ENCODE measurements at regions of chr4 and their contacts with region 1.

Region 1: DNA sequence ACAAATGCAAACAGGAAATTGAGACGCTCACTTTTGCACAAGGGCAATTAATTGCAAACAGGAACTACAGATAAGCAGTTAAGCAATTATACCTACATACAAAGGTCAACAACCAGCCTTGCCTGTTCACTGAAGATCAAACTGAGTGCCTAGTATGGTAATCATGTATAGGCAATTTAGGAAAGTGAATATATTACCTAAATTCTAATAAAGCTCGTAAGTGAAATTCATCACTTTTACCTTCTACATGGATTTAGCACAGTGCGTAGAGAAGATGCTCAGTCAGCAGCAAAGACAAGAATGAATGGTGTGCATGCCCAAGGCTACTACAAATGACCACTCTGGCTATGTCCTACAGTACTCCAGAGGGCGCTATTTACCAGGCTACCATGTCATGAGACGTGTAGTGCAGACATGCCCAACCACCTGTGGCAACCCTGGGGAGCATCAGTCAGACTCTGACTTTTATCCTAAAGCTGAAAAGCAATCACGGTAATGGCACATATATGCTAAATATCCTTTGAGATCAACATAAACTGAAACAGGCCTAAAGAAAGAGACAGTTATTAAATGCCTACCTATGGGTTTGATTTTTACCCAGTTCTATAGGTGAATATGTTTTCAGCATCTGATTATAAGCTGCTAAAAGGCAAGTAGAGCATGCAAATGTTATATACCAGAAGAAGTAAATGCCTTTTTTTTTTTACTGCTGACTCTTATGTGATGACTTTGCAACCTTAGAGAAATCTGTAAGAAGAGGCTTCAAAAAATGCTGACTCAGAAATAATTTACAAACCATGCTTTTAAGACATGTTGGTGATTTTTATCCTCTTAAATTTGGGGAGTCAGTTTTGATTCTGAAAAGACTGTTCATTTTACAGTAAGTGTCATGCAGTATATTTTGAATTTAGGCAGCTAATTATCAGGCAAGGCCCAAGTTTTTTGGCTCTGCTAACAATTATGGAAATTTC is 178.0 kb downstream of the PPP3CA start:
- DNase-seq: peak; percentile 76
- ATAC-seq: peak; percentile 98
- H3K4me3 Mint-ChIP-seq: no peak overlapping the region
- H3K27ac Mint-ChIP-seq: no peak overlapping the region
- H3K4me1 Mint-ChIP-seq: peaks cover 4% of the 10 kb centered on the region
- H3K27me3 Mint-ChIP-seq: no peaks in the 10 kb centered on the region
- CTCF ChIP-seq: peak; percentile 85

Region 2: DNA sequence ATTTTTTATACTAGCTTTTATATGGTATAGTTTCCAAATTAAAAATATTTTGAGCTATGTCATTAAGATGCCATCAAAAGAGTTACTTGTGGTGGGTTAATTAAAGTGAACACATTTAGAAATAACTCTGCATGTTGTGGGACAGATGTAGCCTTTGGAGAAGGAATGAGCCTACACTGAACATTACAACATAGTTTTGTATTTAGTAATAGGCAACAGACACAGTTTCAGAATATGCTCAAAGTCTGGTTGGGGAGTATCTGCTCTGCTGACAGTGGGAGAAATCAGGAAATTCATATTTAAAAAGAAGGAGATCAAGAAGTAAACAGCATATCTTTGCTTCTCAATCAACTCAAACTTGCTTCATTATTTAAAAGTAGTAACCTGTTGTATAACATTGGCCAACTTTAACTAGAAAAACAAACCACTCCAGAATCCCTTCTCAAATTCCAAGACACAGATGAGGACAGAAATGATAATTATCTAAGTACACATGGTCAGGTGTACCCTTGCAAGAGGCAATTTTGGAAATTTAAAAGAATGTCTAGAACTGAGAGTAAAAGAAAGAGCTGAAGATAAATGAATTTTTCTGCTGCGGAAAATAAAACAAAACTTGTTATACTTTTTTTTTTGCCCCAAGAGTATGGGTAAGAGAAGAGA is 675.0 kb before region 1 on chr4:
- CTCF ChIA-PET with region 1: no interaction called
- POLR2A ChIA-PET with region 1: no interaction called
- intact Hi-C with region 1: no loop called
- DNase-seq: no peak
- ATAC-seq: no peak
- H3K4me3 Mint-ChIP-seq: no peak overlapping the region
- H3K27ac Mint-ChIP-seq: no peak overlapping the region
- H3K4me1 Mint-ChIP-seq: no peaks in the 10 kb centered on the region
- H3K27me3 Mint-ChIP-seq: no peaks in the 10 kb centered on the region
- CTCF ChIP-seq: no peak

Region 3: DNA sequence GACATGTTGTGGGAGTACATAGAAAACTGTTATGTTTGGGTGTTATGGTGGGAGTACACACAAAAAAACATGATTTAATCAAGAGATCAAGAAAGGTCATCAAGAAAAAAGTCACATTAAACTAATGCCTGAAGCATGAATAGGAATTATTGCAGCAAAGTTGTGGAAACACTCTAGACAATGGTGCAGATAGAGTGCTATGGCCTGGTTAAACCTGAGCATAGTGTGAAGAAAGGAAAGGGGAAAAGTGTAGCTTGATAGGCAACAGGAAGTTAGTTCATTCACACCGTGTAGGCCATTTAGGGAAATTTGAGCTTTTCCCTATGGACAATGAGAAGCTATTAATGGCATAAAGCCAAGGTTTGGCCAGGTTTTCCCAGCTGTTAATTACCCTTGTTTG is 489.4 kb before region 1 on chr4:
- CTCF ChIA-PET with region 1: no interaction called
- POLR2A ChIA-PET with region 1: no interaction called
- intact Hi-C with region 1: no loop called
- DNase-seq: no peak
- ATAC-seq: no peak
- H3K4me3 Mint-ChIP-seq: no peak overlapping the region
- H3K27ac Mint-ChIP-seq: no peak overlapping the region
- H3K4me1 Mint-ChIP-seq: no peaks in the 10 kb centered on the region
- H3K27me3 Mint-ChIP-seq: peaks cover 2% of the 10 kb centered on the region
- CTCF ChIP-seq: no peak

Region 4: DNA sequence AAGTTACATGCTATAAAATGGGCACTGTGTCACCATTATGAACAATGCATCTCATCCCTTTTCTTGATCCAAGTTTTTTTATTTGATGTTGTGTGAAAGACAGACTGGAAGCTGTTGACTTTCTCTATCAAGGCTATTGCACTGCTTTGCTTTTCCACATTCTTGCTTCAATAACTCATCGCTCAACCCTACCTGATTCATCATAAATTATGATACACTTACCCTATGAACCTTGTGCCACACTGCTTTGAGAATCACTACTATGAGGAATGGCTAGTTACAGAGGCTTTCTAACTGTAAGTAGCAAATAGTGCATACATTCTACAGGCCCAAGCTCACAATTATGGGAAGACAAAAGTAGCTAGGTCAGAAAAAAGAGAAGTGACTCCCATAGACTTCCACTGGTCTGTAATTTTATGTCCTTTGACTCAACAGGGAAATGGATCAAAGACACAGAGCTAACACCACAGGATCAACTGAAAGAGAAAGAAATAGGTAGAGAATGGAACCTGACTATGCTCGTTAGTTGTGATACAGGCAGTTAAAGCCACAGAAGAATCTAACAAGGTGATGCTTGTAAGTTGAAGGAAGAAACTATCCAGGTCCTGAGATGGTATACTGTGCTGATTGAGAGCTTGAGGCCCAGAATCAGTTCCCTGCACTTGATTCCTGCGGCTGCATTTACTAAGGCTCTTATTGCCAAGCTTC is 14.5 kb after region 1 on chr4:
- CTCF ChIA-PET with region 1: interaction called, 11 read pairs
- POLR2A ChIA-PET with region 1: no interaction called
- intact Hi-C with region 1: no loop called
- DNase-seq: no peak
- ATAC-seq: no peak
- H3K4me3 Mint-ChIP-seq: no peak overlapping the region
- H3K27ac Mint-ChIP-seq: no peak overlapping the region
- H3K4me1 Mint-ChIP-seq: peaks cover 8% of the 10 kb centered on the region
- H3K27me3 Mint-ChIP-seq: no peaks in the 10 kb centered on the region
- CTCF ChIP-seq: no peak

Region 5: GRCh38 chr4:101294597-101294996 is 125.3 kb after region 1 on chr4:
- CTCF ChIA-PET with region 1: no interaction called
- POLR2A ChIA-PET with region 1: no interaction called
- intact Hi-C with region 1: no loop called
- DNase-seq: no peak
- ATAC-seq: no peak
- H3K4me3 Mint-ChIP-seq: no peak overlapping the region
- H3K27ac Mint-ChIP-seq: no peak overlapping the region
- H3K4me1 Mint-ChIP-seq: peaks cover 7% of the 10 kb centered on the region
- H3K27me3 Mint-ChIP-seq: no peaks in the 10 kb centered on the region
- CTCF ChIP-seq: no peak

Region 6: GRCh38 chr4:101347557-101348366 is 178.4 kb after region 1 on chr4:
- CTCF ChIA-PET with region 1: interaction called, 9 read pairs
- POLR2A ChIA-PET with region 1: no interaction called
- intact Hi-C with region 1: loop called (anchors 5 kb)
- DNase-seq: peak; percentile 98
- ATAC-seq: peak; percentile 93
- H3K4me3 Mint-ChIP-seq: peak overlapping the region; percentile 95
- H3K27ac Mint-ChIP-seq: peak overlapping the region; percentile 87
- H3K4me1 Mint-ChIP-seq: peaks cover 30% of the 10 kb centered on the region
- H3K27me3 Mint-ChIP-seq: peaks cover 19% of the 10 kb centered on the region
- CTCF ChIP-seq: no peak

Region 7: DNA sequence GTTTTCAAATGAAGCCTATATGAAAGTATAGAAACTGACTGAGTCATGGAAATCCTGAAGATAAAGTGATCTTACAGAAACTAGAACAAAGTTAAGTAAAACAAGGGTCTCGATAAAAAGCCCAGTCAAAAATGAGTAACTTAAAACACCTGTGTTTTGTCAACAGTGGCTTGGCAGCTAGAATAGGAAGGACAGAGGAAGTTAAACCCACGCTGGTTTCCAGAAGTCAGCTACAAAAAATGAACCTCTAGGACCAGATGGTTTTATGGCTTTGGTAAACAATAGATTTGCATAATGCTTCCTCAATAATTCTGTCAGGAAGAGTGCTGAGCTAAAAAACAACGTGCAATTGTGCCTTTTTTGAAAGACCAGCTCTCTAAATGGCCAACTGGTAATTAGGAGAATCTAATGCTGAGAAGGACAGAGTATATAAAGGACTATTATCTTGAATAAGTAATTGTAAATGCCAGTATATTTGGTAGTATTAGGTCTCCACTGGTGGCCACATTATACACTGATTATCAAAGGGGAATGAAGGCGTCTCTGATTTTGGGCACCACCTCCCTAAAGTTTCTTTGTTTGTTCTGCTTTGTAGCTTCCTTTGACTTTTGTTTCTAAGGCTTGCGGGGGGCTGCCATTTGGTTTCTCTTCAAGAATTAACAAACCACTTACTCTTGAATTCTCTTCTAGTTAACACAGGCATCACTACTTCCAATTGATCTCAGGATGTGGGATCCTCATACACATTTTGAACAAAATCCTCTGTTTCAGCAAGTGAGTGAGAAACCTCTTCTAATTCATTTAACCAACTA is 250.2 kb after region 1 on chr4:
- CTCF ChIA-PET with region 1: interaction called, 7 read pairs
- POLR2A ChIA-PET with region 1: no interaction called
- intact Hi-C with region 1: loop called (anchors 10 kb)
- DNase-seq: peak; percentile 40
- ATAC-seq: peak; percentile 35
- H3K4me3 Mint-ChIP-seq: no peak overlapping the region
- H3K27ac Mint-ChIP-seq: peak overlapping the region; percentile 46
- H3K4me1 Mint-ChIP-seq: peaks cover 42% of the 10 kb centered on the region
- H3K27me3 Mint-ChIP-seq: peaks cover 24% of the 10 kb centered on the region
- CTCF ChIP-seq: no peak

Region 8: DNA sequence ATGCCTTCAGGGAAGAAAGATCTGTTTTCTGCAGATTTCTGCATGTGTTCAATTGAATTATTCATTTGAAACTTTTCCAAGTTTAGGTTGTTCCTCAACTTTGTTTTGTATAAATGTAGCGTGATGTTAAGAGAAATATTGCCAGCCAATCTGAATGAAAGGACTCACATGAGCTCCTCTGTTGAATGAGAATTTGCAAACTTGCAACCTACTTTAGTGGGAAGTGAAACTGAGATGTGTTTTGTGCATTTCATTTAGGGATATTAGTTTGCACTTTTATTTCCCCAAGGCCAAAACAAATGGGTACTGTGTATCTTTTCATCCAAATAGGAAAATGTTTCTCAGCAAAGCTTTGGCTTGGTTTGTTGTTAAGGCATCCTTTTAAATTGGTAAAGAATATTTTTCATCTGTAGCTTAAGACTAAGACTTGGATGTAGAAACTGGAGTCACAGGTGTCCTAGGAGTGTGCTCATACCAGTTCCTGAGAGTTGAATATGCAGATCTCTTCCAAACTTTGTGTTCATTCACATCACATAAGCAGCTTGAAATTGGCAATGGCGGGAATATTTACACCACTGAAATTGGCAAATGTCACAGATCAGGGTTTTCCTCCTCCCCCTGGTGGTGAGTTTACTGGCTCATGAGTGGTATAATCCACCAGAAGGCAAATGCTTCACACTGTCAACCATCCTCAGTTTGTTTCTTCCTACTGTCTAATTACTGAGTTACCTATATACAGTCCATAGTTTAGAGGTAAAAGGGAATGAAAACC is 427.6 kb after region 1 on chr4:
- CTCF ChIA-PET with region 1: interaction called, 12 read pairs
- POLR2A ChIA-PET with region 1: no interaction called
- intact Hi-C with region 1: loop called (anchors 2 kb)
- DNase-seq: peak; percentile 32
- ATAC-seq: peak; percentile 34
- H3K4me3 Mint-ChIP-seq: no peak overlapping the region
- H3K27ac Mint-ChIP-seq: no peak overlapping the region
- H3K4me1 Mint-ChIP-seq: peaks cover 2% of the 10 kb centered on the region
- H3K27me3 Mint-ChIP-seq: peaks cover 1% of the 10 kb centered on the region
- CTCF ChIP-seq: peak; percentile 51

Region 9: GRCh38 chr4:101730291-101731117 is 561.2 kb after region 1 on chr4:
- CTCF ChIA-PET with region 1: interaction called, 20 read pairs
- POLR2A ChIA-PET with region 1: no interaction called
- intact Hi-C with region 1: loop called (anchors 2 kb)
- DNase-seq: peak; percentile 73
- ATAC-seq: peak; percentile 74
- H3K4me3 Mint-ChIP-seq: no peak overlapping the region
- H3K27ac Mint-ChIP-seq: no peak overlapping the region
- H3K4me1 Mint-ChIP-seq: no peaks in the 10 kb centered on the region
- H3K27me3 Mint-ChIP-seq: peaks cover 9% of the 10 kb centered on the region
- CTCF ChIP-seq: peak; percentile 61

Region 10: DNA sequence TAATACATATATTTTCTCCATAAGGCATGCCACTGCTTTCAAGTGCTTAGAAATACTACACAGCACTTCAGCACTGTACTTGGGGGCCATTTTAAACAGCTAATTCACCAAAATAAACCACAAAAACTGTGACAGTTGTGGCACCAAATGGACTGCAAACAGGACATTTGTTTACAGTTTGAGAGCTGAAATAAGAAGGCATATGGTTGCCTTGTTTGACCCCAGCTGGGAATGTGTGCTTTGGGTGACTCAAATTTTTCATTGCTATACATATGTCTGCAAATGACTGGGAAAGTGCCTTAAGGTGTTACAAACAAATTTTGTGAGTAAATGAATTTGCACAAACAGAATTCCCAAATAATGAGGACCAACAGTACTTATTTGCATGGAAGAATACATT is 745.4 kb after region 1 on chr4:
- CTCF ChIA-PET with region 1: no interaction called
- POLR2A ChIA-PET with region 1: no interaction called
- intact Hi-C with region 1: no loop called
- DNase-seq: no peak
- ATAC-seq: no peak
- H3K4me3 Mint-ChIP-seq: no peak overlapping the region
- H3K27ac Mint-ChIP-seq: no peak overlapping the region
- H3K4me1 Mint-ChIP-seq: no peaks in the 10 kb centered on the region
- H3K27me3 Mint-ChIP-seq: no peaks in the 10 kb centered on the region
- CTCF ChIP-seq: no peak